Natural killer cell (primary cell): ENCODE measurements at regions of chr11 and their contacts with region 1.

Region 1: DNA sequence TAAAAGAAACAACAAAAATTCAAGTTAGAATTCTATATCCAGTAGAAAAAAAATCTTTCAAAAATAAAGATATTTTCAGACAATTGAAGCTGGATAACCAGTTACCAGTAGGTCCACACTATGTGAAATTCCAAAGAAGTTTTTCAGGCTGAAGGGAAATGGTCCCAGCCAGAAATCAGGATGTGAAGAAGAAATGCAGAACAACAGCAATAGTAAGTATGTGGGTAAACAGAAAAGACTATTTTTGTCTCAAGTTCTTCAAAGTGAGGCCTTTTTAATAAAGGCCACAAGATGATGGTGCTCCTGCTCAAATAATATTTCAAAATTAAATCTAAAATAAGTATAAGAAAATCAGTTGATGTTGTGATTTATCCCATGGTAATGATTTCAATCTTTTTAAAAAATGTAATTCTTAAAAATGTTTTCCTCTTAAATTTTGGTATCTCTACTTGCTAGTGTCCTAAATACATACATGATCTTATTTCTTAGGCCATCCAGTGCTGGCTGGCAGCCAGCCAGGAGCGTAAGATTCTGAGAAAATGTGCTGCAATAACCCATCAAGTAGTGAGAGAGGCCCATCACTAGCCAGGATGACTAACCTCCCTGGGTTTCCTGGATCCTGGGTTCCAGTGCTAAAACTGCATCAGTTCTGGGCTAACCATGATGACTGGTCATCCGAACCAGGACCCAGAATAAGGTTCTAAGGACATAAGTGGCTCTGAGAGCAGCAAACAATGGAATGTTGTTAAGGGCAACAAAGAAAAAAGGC is 15.6 kb upstream of the UCP3 start:
- DNase-seq: peak in 1 of 2 donors; percentile 31
- ATAC-seq: no peak
- H3K4me3 ChIP-seq: no peak overlapping the region
- H3K4me3 Mint-ChIP-seq: no peak overlapping the region
- H3K27ac ChIP-seq: no peak overlapping the region
- H3K27ac Mint-ChIP-seq: peak overlapping the region in 1 of 2 donors; percentile 54
- H3K4me1 ChIP-seq: peaks cover 40% of the 10 kb centered on the region
- H3K4me1 Mint-ChIP-seq: peaks cover 20 to 30% of the 10 kb centered on the region in 2 donors
- H3K27me3 ChIP-seq: no peaks in the 10 kb centered on the region
- H3K27me3 Mint-ChIP-seq: no peaks in the 10 kb centered on the region
- CTCF ChIP-seq: no peak

Region 2: DNA sequence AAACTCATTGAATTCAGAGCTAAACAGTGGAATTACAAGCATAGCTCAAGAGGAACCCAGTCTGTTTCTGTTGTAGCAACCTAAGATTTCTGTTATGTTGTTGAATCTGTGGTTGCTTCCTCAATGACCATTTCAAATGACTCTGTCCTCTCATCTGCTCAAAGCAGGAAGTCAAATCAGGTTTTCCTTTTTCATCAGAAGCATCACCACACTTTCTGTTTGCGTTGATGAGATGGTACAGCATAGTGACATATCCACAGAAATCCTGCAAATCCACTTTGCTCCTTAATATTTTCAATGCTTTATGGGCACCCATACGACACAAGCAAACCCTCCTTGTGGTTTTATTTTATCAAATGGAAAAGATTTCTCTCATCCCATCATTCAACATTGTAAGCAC is 29.2 kb before region 1 on chr11:
- intact Hi-C with region 1: loop called (anchors 1 kb)
- DNase-seq: peak in 1 of 2 donors; percentile 87
- ATAC-seq: peak; percentile 72 to 90 (median 89)
- H3K4me3 ChIP-seq: no peak overlapping the region
- H3K4me3 Mint-ChIP-seq: peak overlapping the region; percentile 92
- H3K27ac ChIP-seq: peak overlapping the region; percentile 95
- H3K27ac Mint-ChIP-seq: peak overlapping the region; percentile 98 to 100
- H3K4me1 ChIP-seq: peaks cover 29% of the 10 kb centered on the region
- H3K4me1 Mint-ChIP-seq: peaks cover 43 to 47% of the 10 kb centered on the region in 2 donors
- H3K27me3 ChIP-seq: no peaks in the 10 kb centered on the region
- H3K27me3 Mint-ChIP-seq: no peaks in the 10 kb centered on the region
- CTCF ChIP-seq: no peak

Region 3: DNA sequence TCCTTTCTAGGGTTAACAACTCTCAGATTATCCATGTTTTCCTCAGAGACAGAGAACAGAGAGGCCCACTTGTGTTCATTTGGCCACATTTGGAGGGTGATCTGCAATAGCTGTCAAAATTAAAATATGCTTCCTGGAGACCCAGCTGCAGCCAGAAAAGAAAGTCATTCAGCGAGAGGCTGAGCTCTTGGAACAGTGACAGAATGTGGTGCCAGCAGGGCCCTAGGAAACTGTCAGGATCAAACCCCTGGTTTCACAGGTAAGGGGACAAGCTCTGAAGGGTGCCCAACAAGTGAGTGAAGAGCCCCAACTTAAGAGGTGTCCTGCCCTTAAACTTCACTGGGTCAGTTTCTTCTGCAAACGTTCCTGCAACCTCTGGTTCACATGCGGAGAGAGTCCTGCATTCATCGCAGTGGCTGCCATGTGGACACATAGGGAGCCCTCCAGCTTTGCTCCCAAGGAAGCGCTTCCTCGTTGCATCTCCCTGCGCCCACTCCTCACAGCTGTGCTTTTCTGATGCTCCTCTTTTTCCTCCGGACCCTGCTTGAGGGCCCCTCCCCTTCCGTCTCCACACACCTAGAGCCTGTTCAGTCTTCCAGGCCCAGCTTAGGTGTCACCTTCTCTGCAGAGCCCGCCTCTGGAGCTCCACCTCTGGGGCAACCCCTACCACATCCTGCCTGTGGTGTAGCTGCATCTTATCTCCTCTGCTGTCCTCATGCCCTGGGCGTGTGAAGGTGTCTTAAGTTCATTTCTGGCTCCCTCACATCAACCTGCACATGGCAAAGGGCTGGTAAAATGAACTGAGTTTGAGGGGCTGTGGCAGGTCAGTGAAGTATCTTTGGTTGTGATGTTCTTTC is 19.5 kb before region 1 on chr11:
- intact Hi-C with region 1: loop called (anchors 1 kb)
- DNase-seq: peak; percentile 70 to 95
- ATAC-seq: peak; percentile 93 to 97 (median 93)
- H3K4me3 ChIP-seq: no peak overlapping the region
- H3K4me3 Mint-ChIP-seq: peak overlapping the region; percentile 86
- H3K27ac ChIP-seq: peak overlapping the region; percentile 76
- H3K27ac Mint-ChIP-seq: peak overlapping the region; percentile 91 to 93
- H3K4me1 ChIP-seq: peaks cover 77% of the 10 kb centered on the region
- H3K4me1 Mint-ChIP-seq: peaks cover 72 to 81% of the 10 kb centered on the region in 2 donors
- H3K27me3 ChIP-seq: no peaks in the 10 kb centered on the region
- H3K27me3 Mint-ChIP-seq: no peaks in the 10 kb centered on the region
- CTCF ChIP-seq: no peak